HEK293T (cell line): ENCODE measurements at regions of chr17 and their contacts with region 1.

Region 1: DNA sequence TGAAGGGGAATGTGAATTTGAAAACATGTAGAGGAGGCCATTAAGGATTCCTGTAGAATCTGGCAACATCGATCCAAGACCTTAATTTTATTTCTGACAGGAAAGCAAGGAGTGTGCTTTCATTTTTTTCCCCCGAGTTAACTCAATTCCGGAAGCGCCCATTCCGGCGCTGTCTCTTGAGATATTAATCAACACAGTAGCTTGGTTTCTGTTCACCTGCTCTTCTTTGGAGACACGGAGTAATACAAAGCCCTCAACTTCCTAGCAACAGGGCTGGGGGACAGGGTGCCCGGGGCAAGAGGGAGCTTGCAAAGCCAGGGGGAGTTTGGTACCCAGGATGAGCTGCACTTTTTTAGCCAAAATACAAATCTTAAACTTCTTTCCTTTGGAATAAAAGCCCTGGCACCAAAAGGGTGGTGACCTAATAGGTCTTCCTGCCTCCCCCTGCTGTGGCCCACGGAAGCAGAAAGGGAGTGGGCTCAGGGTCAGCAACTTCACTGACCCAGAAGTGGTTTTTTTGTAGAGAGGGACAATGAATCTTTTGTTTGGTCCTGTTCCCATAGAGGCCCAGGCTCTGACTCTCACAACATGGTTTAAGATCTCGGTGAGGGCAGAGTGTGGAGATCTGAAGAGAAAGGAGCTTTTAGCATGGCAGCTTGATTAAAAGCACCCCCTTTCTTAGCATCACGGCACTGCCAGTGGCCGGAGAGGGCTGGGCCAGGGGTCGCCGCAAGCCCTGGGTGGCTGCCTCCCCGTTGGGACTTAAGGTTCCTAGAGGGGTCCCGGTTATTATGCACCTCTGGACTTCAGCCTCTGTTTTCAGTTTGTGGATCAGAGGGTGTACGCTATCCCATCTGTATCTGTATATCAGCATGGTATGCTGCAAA is 207.3 kb downstream of the CCDC182 start:
- DNase-seq: no peak

Region 2: GRCh38 chr17:57490890-57491289 is 46.9 kb before region 1 on chr17:
- CTCF ChIA-PET with region 1: no interaction called
- POLR2A ChIA-PET with region 1: no interaction called
- DNase-seq: no peak

Region 3: GRCh38 chr17:57552114-57552624 is 14.4 kb after region 1 on chr17:
- CTCF ChIA-PET with region 1: interaction called, 18 read pairs
- POLR2A ChIA-PET with region 1: interaction called, 3 read pairs
- DNase-seq: peak; percentile 71